Activated naive CD4-positive, alpha-beta T cell treated with anti-CD3 and anti-CD28 coated beads for 36 hours (primary cell): ENCODE measurements at regions of chr17 and their contacts with region 1.

Region 1: GRCh38 chr17:42025191-42025579 is 5.3 kb downstream of the NKIRAS2 start:
- DNase-seq: no peak
- H3K4me3 Mint-ChIP-seq: no peak overlapping the region
- H3K27ac Mint-ChIP-seq: peak overlapping the region; percentile 66
- H3K4me1 Mint-ChIP-seq: peaks cover 29% of the 10 kb centered on the region
- H3K27me3 Mint-ChIP-seq: no peaks in the 10 kb centered on the region

Region 2: DNA sequence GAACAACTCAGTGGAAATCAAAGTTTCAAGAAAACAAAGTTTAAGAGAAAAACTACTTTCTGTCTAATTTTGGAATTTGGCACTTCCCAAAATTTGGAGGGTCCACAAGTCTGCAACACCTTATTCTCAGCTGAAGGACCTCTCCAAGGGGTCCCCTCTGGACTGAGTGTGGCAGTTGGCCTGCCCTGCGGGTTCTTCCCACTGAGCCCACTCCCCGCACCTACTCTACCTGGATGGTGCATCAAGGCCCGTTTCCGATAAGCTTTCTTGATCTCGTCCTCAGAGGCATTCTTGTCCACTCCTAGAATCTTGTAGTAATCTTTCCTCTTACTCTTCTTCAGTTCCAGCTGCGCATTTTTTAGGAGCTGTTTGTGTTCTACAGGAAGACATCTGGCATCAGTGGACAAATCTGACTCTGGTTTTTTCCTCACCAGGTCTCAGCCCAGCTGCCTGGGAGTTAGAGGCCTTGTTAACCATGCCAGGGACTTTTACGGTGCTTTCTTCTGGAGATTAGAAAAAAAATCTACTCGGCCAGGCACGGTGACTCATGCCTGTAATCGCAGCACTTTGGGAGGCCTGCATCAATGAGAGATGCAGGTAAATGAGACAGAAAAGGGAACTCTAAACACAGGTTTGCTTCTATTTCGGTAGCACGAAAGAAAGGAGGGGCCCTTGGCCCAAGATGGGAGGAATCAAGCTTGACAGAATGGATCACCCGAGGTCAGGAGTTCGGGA is 43.0 kb before region 1 on chr17:
- CTCF ChIA-PET with region 1: no interaction called
- intact Hi-C with region 1: no loop called
- DNase-seq: no peak
- H3K4me3 Mint-ChIP-seq: no peak overlapping the region
- H3K27ac Mint-ChIP-seq: peak overlapping the region; percentile 30
- H3K4me1 Mint-ChIP-seq: peaks cover 3% of the 10 kb centered on the region
- H3K27me3 Mint-ChIP-seq: no peaks in the 10 kb centered on the region

Region 3: GRCh38 chr17:42050393-42051012 is 25.3 kb after region 1 on chr17 and contains the start of gene C17orf113:
- CTCF ChIA-PET with region 1: interaction called, 4 read pairs
- intact Hi-C with region 1: loop called (anchors 1 kb)
- DNase-seq: peak; percentile 66
- H3K4me3 Mint-ChIP-seq: peak within 1 kb of the TSS; percentile 68
- H3K27ac Mint-ChIP-seq: no peak within 1 kb of the TSS
- H3K4me1 Mint-ChIP-seq: peaks cover 3% of the 10 kb centered on the region
- H3K27me3 Mint-ChIP-seq: peaks cover 26% of the 10 kb centered on the region
- total RNA-seq, gene C17orf113: 0.20 to 0.31 TPM

Region 4: DNA sequence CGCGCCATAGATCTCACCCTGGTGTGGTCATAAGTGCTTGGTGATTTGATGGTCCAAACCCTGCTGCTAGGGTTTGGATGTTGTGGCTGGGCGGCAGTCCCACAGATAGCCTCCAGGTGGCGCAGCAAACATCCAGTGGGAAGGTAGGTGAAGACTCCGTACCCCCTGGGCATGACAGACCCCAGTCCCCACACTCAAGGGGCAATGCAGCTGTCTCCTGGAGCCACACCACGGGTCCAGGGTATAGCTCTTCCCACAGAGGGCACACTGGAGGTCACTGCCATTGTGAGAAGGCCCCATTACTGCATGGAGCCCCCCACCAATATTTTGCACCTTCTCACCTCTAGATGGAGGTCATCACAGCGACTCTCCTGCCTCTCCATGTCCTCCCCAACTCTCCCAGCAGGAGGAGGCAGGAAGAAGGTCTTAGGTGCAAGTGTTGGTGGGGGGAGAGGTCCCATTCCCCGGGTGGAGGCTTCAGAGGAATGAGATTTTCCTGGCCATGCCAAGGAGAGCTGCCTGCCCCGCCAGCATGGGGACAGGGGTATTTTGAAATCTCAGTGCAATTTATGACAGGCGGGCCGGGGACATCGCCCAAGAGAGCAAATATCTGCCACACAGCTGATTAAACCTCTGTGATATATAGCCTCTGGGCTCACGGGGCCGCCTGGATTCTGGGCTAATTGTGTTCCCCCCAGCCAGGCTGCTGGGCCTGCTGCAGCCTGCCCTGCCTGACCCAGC is 42.3 kb after region 1 on chr17:
- CTCF ChIA-PET with region 1: interaction called, 23 read pairs
- intact Hi-C with region 1: loop called (anchors 1 kb)
- DNase-seq: peak; percentile 83
- H3K4me3 Mint-ChIP-seq: no peak overlapping the region
- H3K27ac Mint-ChIP-seq: no peak overlapping the region
- H3K4me1 Mint-ChIP-seq: peaks cover 22% of the 10 kb centered on the region
- H3K27me3 Mint-ChIP-seq: peaks cover 15% of the 10 kb centered on the region